ENCODE measurements at regions of chrX and their contacts with region 1.

Region 1: GRCh38 chrX:48021026-48021900 is 14.5 kb downstream of the SPACA5 start:
- DNase-seq: peak; percentile 80 to 90
- ATAC-seq: peak; percentile 72 to 92 (median 90)
- H3K4me3 ChIP-seq: peak overlapping the region; percentile 66
- H3K27ac ChIP-seq: peak overlapping the region; percentile 72
- H3K4me1 ChIP-seq: no peaks in the 10 kb centered on the region
- H3K27me3 ChIP-seq: no peaks in the 10 kb centered on the region
- CTCF ChIP-seq: no peak

Region 2: DNA sequence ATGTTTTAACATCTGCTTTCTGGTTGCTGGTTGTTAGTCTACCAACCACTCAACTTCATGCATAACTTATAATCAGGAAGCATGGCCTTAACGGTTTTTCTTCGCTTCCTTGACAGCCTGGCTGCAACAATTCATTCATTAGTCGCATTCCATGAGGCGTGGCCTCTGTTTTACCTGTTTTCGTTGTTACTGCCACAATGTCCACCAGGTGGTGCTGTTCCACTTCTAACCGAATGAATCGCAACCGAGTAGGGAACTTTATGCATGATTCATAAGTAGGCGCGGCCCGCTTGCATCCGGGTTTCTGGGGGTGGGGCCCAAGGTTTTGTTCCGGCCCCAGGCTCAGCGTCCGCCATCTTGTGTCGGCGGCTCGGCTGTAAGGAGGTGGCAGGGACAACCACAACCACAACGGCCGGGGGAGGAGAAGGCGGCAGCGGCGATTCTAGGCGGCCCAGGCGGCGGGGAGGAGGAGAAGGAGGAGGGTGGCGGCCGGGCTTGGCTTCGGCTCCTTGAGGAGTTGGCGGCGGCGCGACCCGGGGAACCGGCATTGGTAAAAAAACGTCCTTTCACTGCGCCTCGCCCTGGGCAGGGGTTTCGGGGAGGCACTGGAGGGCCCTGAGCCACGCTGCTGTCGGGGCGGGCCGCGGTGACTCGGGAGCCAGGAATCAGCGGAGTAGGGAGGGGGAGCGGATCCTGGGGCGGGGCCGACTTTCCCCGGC is 827.6 kb before region 1 on chrX and contains the start of gene UBA1:
- intact Hi-C with region 1: loop called in 1 of 2 experiments (anchors 5 kb)
- DNase-seq: peak; percentile 96 to 98
- ATAC-seq: peak; percentile 88 to 91 (median 90)
- H3K4me3 ChIP-seq: peak within 1 kb of the TSS; percentile 83
- H3K27ac ChIP-seq: peak within 1 kb of the TSS; percentile 97
- H3K4me1 ChIP-seq: peaks cover 43% of the 10 kb centered on the region
- H3K27me3 ChIP-seq: no peaks in the 10 kb centered on the region
- CTCF ChIP-seq: peak; percentile 92
- total RNA-seq, gene UBA1: 145 to 230 (median 187) TPM

Region 3: GRCh38 chrX:47540754-47541538 is 480.3 kb before region 1 on chrX:
- intact Hi-C with region 1: loop called in 1 of 2 experiments (anchors 10 kb)
- DNase-seq: peak; percentile 55 to 78
- ATAC-seq: peak; percentile 96 to 99 (median 98)
- H3K4me3 ChIP-seq: no peak overlapping the region
- H3K27ac ChIP-seq: peak overlapping the region; percentile 72
- H3K4me1 ChIP-seq: peaks cover 6% of the 10 kb centered on the region
- H3K27me3 ChIP-seq: no peaks in the 10 kb centered on the region
- CTCF ChIP-seq: peak; percentile 47

Region 4: GRCh38 chrX:47836164-47837072 is 184.8 kb before region 1 on chrX and contains the start of gene ZNF81:
- intact Hi-C with region 1: loop called (anchors 5 to 10 kb)
- DNase-seq: peak; percentile 97 to 98
- ATAC-seq: peak; percentile 98 to 100 (median 98)
- H3K4me3 ChIP-seq: peak within 1 kb of the TSS; percentile 66
- H3K27ac ChIP-seq: peak within 1 kb of the TSS; percentile 66
- H3K4me1 ChIP-seq: no peaks in the 10 kb centered on the region
- H3K27me3 ChIP-seq: no peaks in the 10 kb centered on the region
- CTCF ChIP-seq: no peak
- total RNA-seq, gene ZNF81: 1.8 to 5.5 (median 4.3) TPM

Region 5: GRCh38 chrX:47854474-47854873 is 166.8 kb before region 1 on chrX:
- intact Hi-C with region 1: loop called in 1 of 2 experiments (anchors 5 kb)
- DNase-seq: peak in 1 of 2 donors; percentile 13
- ATAC-seq: no peak
- H3K4me3 ChIP-seq: no peak overlapping the region
- H3K27ac ChIP-seq: no peak overlapping the region
- H3K4me1 ChIP-seq: no peaks in the 10 kb centered on the region
- H3K27me3 ChIP-seq: no peaks in the 10 kb centered on the region
- CTCF ChIP-seq: peak; percentile 27

Region 6: DNA sequence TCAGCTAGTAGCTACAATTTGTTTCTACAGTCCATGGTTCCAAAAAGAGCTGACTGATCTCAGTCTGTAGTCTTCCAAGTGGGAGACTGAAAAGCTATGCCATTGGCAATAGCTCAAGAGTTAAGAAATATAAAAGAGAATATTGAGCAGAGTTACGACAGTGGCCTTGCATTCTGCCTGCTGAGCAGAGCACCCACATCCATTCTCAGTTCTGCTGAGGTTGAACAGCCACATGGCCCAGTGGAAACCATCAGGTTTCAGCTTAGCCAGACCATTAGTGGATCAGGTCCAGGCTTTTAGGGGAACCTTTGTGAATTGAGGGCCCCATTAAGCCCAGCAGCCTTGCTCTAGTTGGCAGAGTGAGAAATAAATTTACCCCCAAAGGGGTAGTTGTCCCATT is 156.5 kb before region 1 on chrX:
- intact Hi-C with region 1: no loop called
- DNase-seq: no peak
- ATAC-seq: no peak
- H3K4me3 ChIP-seq: no peak overlapping the region
- H3K27ac ChIP-seq: no peak overlapping the region
- H3K4me1 ChIP-seq: no peaks in the 10 kb centered on the region
- H3K27me3 ChIP-seq: peaks cover 0 to 8% (median 0%) of the 10 kb centered on the region in 3 donors
- CTCF ChIP-seq: no peak

Region 7: GRCh38 chrX:48720577-48721250 is 699.5 kb after region 1 on chrX:
- intact Hi-C with region 1: no loop called
- DNase-seq: no peak
- ATAC-seq: no peak
- H3K4me3 ChIP-seq: no peak overlapping the region
- H3K27ac ChIP-seq: no peak overlapping the region
- H3K4me1 ChIP-seq: no peaks in the 10 kb centered on the region
- H3K27me3 ChIP-seq: no peaks in the 10 kb centered on the region
- CTCF ChIP-seq: no peak

Measured in psoas muscle (tissue), 8 donors.